ENCODE measurements at regions of chr6 and their contacts with region 1.

Region 1: DNA sequence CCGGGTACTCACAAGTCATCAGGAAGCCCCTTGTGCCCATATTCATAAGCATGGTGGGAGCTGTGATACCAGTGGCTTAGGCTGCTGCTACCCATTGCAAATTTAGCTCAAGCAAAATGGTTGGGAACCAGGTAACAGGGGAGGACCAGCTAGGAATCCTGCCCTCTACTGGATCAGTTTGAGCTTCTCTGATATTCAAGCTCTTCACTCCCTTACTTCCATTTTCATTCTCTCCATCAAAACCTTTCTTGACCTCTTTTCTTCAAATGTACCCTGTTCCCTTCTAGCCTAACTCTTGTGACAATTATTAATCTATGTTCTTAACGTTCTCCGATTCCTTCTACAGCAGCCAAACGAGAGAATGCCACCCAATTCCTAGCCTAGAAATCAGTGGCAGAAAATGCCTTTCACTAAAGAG is 9.7 kb downstream of the NOL7 start:
- DNase-seq: no peak
- H3K4me3 ChIP-seq: no peak overlapping the region
- H3K27ac ChIP-seq: no peak overlapping the region
- H3K4me1 ChIP-seq: peaks cover 0 to 3% (median 0%) of the 10 kb centered on the region in 4 donors
- H3K27me3 ChIP-seq: no peaks in the 10 kb centered on the region
- CTCF ChIP-seq: peak in 1 of 2 experiments; percentile 22

Region 2: DNA sequence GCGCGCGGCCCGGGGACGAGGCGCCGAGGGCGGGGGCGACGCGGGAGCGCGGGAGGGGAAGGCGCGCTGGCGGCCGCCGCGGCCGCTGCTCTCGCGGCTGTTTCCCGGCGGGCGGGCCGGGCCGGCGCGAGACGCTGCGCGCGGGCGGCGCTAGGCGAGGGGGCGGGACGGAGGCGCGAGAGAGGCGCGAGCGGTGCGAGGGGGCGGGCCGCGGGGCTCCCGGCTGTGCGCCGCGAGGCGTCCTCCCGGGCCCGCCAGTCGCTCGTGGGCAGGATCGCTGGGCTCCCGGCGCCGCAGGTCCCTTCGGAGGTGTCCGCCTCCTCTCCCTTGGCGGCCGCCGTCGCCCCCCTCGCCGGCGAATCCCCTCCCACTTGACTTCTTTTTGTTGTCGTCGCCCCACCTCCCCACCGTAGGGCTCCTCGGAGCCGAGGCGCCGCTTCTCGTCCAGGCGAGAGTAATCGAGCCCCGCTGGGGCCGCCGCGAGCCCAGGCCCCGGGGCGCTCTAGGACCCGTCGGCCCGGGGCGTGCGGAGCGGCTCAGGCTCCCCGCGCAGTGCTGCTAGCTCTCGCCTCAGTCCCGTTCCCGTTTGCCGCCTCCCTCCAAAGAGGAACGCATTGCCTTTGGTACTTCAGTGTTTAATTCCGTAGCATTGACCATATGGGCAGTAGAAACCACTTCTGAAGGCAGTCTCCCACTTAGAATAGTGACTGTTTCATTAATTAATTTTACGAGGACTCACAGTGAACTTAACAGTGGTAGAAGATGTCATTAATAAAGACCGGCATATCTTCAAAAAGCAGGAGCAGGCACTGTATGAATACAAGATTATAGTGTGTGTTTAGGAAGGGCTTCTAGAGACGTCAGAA is 87.1 kb after region 1 on chr6 and contains the start of gene RANBP9:
- intact Hi-C with region 1: loop called (anchors 10 kb)
- DNase-seq: peak; percentile 89 to 94
- H3K4me3 ChIP-seq: peak within 1 kb of the TSS; percentile 76 to 92
- H3K27ac ChIP-seq: peak within 1 kb of the TSS; percentile 92 to 96
- H3K4me1 ChIP-seq: peaks cover 0 to 23% (median 16%) of the 10 kb centered on the region in 4 donors
- H3K27me3 ChIP-seq: no peaks in the 10 kb centered on the region
- CTCF ChIP-seq: no peak